Left ventricle myocardium inferior (tissue), 1 donor: ENCODE measurements at regions of chr12 and their contacts with region 1.

Region 1: DNA sequence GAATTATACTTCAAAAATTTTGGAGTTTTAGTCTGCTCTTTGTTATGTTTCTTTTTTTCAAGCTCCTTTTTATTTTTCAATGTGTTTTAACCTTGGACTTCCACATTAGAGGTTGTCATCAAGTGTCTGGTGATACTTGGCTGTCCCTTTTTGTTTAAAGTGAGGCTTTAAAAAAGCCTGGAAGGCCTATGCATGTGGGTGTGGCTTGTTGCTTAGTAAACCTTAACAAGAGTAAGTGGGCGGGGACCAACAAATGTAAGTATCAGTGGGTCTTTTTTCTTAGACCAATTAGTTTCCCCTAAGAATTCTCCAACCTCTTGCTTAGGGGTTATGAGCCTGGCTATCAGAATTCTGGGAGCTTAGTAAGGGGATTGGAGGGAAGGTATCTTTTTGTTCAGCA is 26.4 kb downstream of the HCFC2 start:
- DNase-seq: no peak
- H3K4me3 ChIP-seq: no peak overlapping the region
- H3K27ac ChIP-seq: no peak overlapping the region
- H3K4me1 ChIP-seq: no peaks in the 10 kb centered on the region
- H3K27me3 ChIP-seq: no peaks in the 10 kb centered on the region
- CTCF ChIP-seq: no peak

Region 2: GRCh38 chr12:103936679-103937078 is 154.0 kb before region 1 on chr12:
- intact Hi-C with region 1: loop called (anchors 5 kb)
- DNase-seq: no peak
- H3K4me3 ChIP-seq: no peak overlapping the region
- H3K27ac ChIP-seq: no peak overlapping the region
- H3K4me1 ChIP-seq: peaks cover 54% of the 10 kb centered on the region
- H3K27me3 ChIP-seq: no peaks in the 10 kb centered on the region
- CTCF ChIP-seq: no peak